ENCODE measurements at regions of chr4 and their contacts with region 1.

Region 1: DNA sequence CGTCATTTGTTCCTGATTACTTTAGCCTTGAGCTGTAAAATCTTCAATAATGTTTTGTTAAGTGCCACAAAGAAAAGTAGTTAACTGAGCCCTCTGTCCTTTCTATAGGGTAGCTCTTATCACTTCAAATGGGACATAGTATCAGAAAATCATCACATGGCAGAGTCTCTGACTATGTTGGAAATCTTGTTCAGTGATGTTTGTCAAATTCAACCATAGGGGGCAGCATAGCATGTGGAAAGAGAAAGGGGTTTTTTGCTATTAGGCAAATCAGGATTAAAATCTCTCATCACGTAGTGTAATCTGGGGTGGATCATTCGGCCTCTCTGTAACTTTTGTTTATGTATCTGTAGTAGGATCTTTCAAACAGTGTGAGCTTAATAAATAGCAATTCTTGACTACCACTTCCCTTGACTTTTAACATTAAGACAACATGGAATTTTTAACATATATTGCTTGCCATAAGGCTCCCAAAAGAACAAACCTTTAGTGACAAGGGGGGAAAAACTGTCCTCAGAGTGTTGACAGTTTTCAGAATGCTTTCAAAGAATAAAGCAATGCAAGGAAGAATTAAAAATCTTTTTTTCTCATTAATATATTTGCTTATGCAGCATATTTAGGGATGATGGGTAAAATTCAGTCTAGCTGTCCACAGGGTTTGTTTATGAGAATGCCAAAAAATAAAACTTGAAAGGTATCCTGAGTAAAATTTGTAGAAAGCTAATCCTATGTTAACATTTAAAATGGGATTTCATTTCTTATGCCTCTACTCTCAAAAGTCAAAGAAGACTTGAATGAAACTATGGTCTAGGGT is 127.2 kb downstream of the FBXW7 start:
- DNase-seq: peak; percentile 15
- ATAC-seq: peak; percentile 70
- H3K4me3 ChIP-seq: no peak overlapping the region
- H3K27ac ChIP-seq: no peak overlapping the region
- H3K4me1 ChIP-seq: no peaks in the 10 kb centered on the region
- H3K27me3 ChIP-seq: no peaks in the 10 kb centered on the region
- CTCF ChIP-seq: peak; percentile 53 to 81 (median 64); a peak in 5 of 6 replicates
- POLR2A ChIP-seq: no peak
- RAD21 ChIP-seq: peak; percentile 69

Region 2: GRCh38 chr4:152073351-152074087 is 335.2 kb before region 1 on chr4:
- CTCF ChIA-PET with region 1: no interaction called
- POLR2A ChIA-PET with region 1: no interaction called
- RAD21 ChIA-PET with region 1: no interaction called
- intact Hi-C with region 1: no loop called
- DNase-seq: no peak
- ATAC-seq: no peak
- H3K4me3 ChIP-seq: no peak overlapping the region
- H3K27ac ChIP-seq: no peak overlapping the region
- H3K4me1 ChIP-seq: no peaks in the 10 kb centered on the region
- H3K27me3 ChIP-seq: no peaks in the 10 kb centered on the region
- CTCF ChIP-seq: no peak
- POLR2A ChIP-seq: no peak
- RAD21 ChIP-seq: no peak

Region 3: DNA sequence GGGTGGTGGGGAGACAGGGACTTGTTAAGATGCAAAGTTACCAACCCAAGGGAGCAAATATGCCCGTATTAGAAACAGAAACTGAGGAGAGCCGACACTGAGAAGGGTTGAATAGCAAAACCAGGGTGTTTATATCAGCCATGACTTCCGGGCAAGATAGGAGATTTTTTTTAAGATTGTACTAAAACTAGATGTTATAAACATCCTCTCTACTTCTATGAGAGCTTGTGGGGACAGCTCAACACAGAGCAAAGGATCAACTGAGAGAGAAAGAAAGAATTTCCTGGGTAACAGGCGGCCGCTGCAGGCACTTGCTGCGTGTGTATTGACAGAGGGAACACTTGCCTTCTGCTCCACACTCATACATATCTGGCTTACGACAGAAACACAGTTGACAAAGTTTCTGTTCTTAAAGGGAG is 176.3 kb after region 1 on chr4:
- CTCF ChIA-PET with region 1: no interaction called
- POLR2A ChIA-PET with region 1: no interaction called
- RAD21 ChIA-PET with region 1: no interaction called
- intact Hi-C with region 1: no loop called
- DNase-seq: no peak
- ATAC-seq: no peak
- H3K4me3 ChIP-seq: no peak overlapping the region
- H3K27ac ChIP-seq: no peak overlapping the region
- H3K4me1 ChIP-seq: no peaks in the 10 kb centered on the region
- H3K27me3 ChIP-seq: no peaks in the 10 kb centered on the region
- CTCF ChIP-seq: no peak
- POLR2A ChIP-seq: no peak
- RAD21 ChIP-seq: no peak

Region 4: GRCh38 chr4:152640058-152640833 is 231.5 kb after region 1 on chr4:
- CTCF ChIA-PET with region 1: interaction called, 4 read pairs
- POLR2A ChIA-PET with region 1: no interaction called
- RAD21 ChIA-PET with region 1: no interaction called
- intact Hi-C with region 1: loop called (anchors 5 kb)
- DNase-seq: no peak
- ATAC-seq: peak; percentile 74
- H3K4me3 ChIP-seq: no peak overlapping the region
- H3K27ac ChIP-seq: no peak overlapping the region
- H3K4me1 ChIP-seq: no peaks in the 10 kb centered on the region
- H3K27me3 ChIP-seq: no peaks in the 10 kb centered on the region
- CTCF ChIP-seq: peak; percentile 31 to 73 (median 63); a peak in 3 of 6 replicates
- POLR2A ChIP-seq: no peak
- RAD21 ChIP-seq: peak; percentile 76

Region 5: DNA sequence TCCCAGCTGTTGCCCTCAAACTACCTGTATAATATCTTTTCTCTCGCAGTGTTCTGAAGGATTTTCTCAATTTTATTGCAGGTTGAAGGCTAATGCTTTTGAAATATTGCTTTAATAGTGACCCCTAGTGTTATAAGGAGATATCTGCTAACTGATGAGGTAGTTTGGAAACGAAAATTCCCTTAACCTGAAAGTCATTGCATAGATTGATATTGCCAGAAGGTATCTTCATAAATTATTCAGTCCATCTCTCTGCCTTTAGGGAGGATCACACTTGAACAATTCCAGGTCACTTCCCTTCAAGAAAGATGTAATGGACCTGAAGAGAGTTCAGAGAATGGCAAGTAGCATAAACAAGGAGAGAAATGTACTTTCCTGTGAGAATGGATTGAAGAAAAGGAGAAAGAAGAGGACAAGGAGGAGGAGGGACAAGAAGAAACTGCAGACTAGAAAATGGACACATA is 326.7 kb after region 1 on chr4:
- CTCF ChIA-PET with region 1: interaction called, 3 read pairs
- POLR2A ChIA-PET with region 1: no interaction called
- RAD21 ChIA-PET with region 1: no interaction called
- intact Hi-C with region 1: loop called (anchors 2 kb)
- DNase-seq: peak; percentile 12
- ATAC-seq: peak; percentile 75
- H3K4me3 ChIP-seq: no peak overlapping the region
- H3K27ac ChIP-seq: no peak overlapping the region
- H3K4me1 ChIP-seq: no peaks in the 10 kb centered on the region
- H3K27me3 ChIP-seq: no peaks in the 10 kb centered on the region
- CTCF ChIP-seq: peak; percentile 44 to 70 (median 54); a peak in 5 of 6 replicates
- POLR2A ChIP-seq: no peak
- RAD21 ChIP-seq: peak; percentile 78